Lower leg skin (tissue), 4 donors: ENCODE measurements at regions of chr7 and their contacts with region 1.

Region 1: DNA sequence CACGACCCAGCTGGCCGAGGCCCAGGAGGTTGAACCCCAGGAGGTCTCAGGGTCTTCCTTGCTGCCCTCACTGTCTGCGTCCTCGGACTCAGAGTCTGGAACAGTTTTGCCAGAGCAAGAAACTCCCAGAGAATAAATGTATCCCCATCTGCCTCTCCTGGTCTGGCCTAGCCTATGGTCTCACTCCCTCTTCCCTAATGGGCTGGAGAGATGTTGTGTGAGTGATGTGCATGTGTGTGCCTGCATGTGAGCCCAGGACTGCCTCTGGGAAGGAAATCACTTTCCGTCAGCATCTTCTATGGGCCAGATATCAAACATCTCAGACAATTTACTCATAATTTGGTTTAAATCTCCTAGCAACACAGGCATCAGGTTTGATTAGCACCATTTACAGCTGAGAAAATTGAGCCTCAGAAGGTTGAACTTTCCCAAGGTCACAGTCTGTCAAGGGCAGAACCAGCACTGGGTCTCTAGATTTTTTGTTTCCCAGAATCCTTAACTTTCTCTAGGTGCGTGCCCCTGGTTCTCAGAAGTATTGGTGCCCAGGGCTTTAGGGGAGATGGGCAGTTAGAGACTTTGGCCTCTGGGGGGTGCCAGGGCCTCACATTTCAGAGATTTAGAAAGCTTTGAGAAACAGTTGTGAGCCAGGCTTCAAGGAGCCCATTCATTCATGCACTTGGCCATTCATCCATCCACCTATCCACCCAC is 4.9 kb downstream of the TMEM270 start:
- DNase-seq: no peak
- H3K4me3 ChIP-seq: no peak overlapping the region
- CTCF ChIP-seq: peak in 1 of 3 donors; percentile 43
- POLR2A ChIP-seq: no peak

Region 2: GRCh38 chr7:73960548-73960947 is 94.7 kb after region 1 on chr7:
- intact Hi-C with region 1: loop called (anchors 10 kb)
- DNase-seq: peak in 1 of 2 donors; percentile 83
- H3K4me3 ChIP-seq: no peak overlapping the region
- CTCF ChIP-seq: no peak
- POLR2A ChIP-seq: no peak

Region 3: DNA sequence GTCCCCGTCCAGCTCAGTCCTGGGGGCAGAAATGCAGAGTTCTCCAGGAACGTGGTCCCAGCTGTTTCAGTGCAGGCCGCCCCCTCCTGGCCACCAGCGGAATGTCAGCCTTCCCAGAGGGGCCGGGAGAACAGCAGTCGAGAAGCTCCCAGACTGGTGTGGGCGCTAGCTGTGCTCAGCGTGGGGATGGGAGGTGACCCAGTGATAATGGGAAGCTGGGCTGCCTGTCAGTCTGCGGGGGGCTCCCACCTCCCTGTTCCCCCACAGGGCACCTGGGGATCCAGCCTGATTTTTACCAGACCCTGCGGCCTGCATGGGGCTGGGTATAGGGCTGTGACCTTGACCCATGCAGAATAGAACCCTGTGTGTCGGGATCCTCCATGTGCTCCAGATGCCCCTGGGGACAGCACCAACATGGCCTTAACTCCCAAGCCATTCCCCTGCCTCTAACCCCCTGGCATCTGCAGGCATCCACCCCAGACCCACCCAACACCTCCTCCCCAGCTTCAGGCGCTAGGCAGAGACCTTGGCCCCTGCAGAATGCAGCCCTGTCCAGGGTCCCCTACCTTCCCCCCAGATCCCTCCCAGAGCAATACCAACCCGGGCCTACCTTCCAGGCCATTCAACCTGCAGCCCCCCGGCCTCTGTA is 161.1 kb after region 1 on chr7:
- intact Hi-C with region 1: loop called (anchors 5 kb)
- DNase-seq: peak; percentile 78 to 97
- H3K4me3 ChIP-seq: no peak overlapping the region
- CTCF ChIP-seq: peak in 1 of 3 donors; percentile 90
- POLR2A ChIP-seq: no peak